B cell (primary cell): ENCODE measurements at regions of chr7 and their contacts with region 1.

Region 1: DNA sequence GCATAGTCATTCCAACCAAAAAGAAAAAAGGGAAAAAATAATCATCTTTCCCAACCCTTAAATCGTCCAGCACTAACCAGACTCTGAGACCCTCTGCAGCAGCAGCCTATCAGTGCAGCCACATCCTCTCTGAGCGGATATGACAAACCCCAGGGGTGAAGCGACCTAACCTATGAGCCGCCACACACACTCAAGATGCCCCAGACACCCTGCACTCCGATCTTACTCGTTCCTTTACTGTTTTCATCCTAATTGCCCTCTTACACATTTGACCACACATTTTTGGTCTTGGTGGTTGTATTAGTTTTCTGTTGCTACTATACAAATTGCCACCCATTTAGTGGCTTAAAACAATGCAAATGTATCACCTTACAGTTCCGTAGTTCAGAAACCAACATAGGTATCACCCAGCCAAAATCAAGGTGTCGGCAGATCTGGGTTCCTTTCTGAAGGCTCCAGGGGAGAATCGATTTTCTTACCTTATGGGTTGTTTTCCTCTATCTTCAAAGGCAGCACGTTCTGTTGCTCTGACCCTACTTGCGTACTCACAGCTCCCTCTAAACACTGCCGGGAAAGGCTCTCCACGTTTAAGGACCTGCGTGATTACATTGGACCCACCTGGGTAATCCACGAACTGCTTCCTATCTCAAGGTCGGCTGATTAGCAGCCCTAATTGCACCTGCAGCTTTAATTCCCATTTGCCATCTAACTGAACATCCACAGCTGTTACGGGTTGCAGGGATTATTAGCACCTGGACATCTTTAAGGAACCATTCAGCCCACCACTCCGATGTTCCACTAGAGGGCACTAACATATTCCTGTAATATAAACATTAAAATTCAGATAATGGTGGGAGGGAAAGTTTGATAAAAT is 37.3 kb upstream of the PRSS1 start:
- DNase-seq: peak; percentile 55
- ATAC-seq: peak; percentile 39
- H3K4me3 ChIP-seq: peak overlapping the region in 1 of 5 experiments; percentile 35
- H3K4me3 Mint-ChIP-seq: peak overlapping the region; percentile 66
- H3K27ac ChIP-seq: no peak overlapping the region
- H3K27ac Mint-ChIP-seq: peak overlapping the region; percentile 42
- H3K4me1 ChIP-seq: peaks cover 17 to 25% of the 10 kb centered on the region in 2 donors
- H3K4me1 Mint-ChIP-seq: peaks cover 24% of the 10 kb centered on the region
- H3K27me3 ChIP-seq: no peaks in the 10 kb centered on the region
- H3K27me3 Mint-ChIP-seq: peaks cover 4% of the 10 kb centered on the region
- CTCF ChIP-seq: peak; percentile 84

Region 2: GRCh38 chr7:142438235-142438922 is 273.6 kb before region 1 on chr7:
- CTCF ChIA-PET with region 1: no interaction called
- POLR2A ChIA-PET with region 1: no interaction called
- intact Hi-C with region 1: no loop called
- DNase-seq: peak; percentile 8
- ATAC-seq: no peak
- H3K4me3 ChIP-seq: no peak overlapping the region
- H3K4me3 Mint-ChIP-seq: no peak overlapping the region
- H3K27ac ChIP-seq: no peak overlapping the region
- H3K27ac Mint-ChIP-seq: no peak overlapping the region
- H3K4me1 ChIP-seq: peaks cover 3 to 13% of the 10 kb centered on the region in 2 donors
- H3K4me1 Mint-ChIP-seq: peaks cover 19% of the 10 kb centered on the region
- H3K27me3 ChIP-seq: no peaks in the 10 kb centered on the region
- H3K27me3 Mint-ChIP-seq: peaks cover 42% of the 10 kb centered on the region
- CTCF ChIP-seq: no peak

Region 3: DNA sequence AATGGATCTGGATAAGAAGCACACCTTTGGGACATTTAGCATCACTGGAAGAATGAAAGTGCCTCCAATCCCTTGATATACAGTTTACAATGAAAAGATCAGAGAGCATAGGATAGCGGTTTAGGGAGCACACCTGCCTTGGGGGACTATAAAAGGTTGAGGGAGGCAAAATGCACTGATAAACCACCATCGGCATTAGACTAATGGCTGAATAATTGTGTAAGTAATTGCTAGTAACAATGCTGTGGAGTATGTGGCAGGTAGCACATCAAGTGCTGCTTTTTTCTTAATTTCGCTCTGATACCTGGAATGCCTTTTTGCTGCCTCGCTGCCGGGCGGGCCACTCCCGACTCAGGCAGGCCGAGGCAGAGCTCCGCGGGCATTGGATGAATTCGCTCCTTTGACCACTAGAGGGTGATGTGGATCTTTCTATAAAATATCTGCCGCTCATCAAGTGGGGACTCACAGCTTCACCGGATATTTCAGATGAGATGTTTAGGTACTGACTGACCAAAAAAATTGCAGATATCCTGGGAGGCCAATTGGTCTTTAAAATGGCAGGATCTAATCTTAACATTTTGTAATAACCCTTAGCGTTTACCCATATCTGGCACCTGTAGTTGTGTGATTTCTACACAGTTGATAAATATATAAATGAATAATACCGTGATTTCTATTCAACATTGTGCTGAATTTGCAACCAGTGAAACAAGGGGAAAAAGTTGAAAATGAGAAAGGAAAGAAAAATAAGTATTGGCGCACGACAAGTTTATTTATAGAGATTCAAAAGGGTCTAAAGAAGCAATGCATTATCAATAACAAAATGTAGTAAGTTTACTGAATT is 79.5 kb before region 1 on chr7:
- CTCF ChIA-PET with region 1: interaction called, 23 read pairs
- POLR2A ChIA-PET with region 1: no interaction called
- intact Hi-C with region 1: loop called (anchors 1 kb)
- DNase-seq: peak; percentile 85
- ATAC-seq: peak; percentile 97
- H3K4me3 ChIP-seq: no peak overlapping the region
- H3K4me3 Mint-ChIP-seq: no peak overlapping the region
- H3K27ac ChIP-seq: no peak overlapping the region
- H3K27ac Mint-ChIP-seq: no peak overlapping the region
- H3K4me1 ChIP-seq: no peaks in the 10 kb centered on the region
- H3K4me1 Mint-ChIP-seq: peaks cover 3% of the 10 kb centered on the region
- H3K27me3 ChIP-seq: peaks cover 0 to 5% (median 2%) of the 10 kb centered on the region in 4 experiments
- H3K27me3 Mint-ChIP-seq: peaks cover 30% of the 10 kb centered on the region
- CTCF ChIP-seq: peak; percentile 85

Region 4: DNA sequence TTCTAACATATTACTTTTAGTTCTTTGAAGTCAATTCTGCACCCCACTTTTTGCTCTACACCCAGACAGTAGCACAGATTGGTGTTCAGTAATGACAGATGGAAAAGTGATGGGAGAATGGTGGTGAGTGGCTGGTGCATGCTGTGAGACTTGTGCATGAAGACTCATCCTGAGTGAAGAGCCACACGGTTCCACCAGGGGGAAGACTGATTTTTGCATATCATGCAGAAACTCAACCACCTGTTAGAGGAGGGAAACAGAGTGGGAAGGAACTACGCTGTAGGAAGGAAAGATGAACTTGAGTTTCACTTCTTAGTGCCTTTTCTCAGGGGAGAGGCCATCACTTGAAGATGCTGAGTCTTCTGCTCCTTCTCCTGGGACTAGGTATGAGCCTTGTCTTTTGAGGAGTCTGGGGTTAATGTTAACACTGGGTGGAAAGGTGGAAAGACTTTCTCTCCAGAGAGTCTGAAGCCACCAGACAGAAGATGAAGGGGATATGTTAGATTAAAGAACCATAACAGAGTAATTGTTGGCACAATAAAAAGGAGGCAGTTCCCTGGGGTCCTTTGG is 28.0 kb after region 1 on chr7:
- CTCF ChIA-PET with region 1: interaction called, 17 read pairs
- POLR2A ChIA-PET with region 1: no interaction called
- intact Hi-C with region 1: loop called (anchors 2 kb)
- DNase-seq: peak; percentile 82
- ATAC-seq: peak; percentile 98
- H3K4me3 ChIP-seq: peak overlapping the region in 1 of 5 experiments; percentile 16
- H3K4me3 Mint-ChIP-seq: peak overlapping the region; percentile 4
- H3K27ac ChIP-seq: no peak overlapping the region
- H3K27ac Mint-ChIP-seq: peak overlapping the region; percentile 75
- H3K4me1 ChIP-seq: peaks cover 22 to 26% of the 10 kb centered on the region in 2 donors
- H3K4me1 Mint-ChIP-seq: peaks cover 41% of the 10 kb centered on the region
- H3K27me3 ChIP-seq: no peaks in the 10 kb centered on the region
- H3K27me3 Mint-ChIP-seq: no peaks in the 10 kb centered on the region
- CTCF ChIP-seq: peak; percentile 64

Region 5: DNA sequence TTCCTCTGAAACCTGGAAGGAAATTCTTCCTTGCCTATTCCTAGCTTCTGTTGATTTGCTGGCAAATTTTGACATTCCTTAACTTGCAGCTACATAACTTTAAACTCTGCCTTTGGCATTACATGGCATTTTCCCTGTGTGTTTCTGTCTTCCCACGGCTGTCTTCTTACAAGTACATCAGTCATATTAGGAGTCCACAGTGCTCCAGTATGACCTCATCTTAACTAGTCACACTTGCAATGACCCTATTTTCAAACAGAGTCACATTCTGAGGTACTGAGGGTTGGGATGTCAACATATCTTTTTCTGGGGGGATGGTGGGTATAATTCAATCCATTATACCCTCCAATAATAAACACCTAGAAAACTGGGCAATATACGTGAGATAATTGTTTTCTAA is 105.5 kb after region 1 on chr7:
- CTCF ChIA-PET with region 1: interaction called, 288 read pairs
- POLR2A ChIA-PET with region 1: interaction called, 4 read pairs
- intact Hi-C with region 1: no loop called
- DNase-seq: no peak
- ATAC-seq: no peak
- H3K4me3 ChIP-seq: no peak overlapping the region
- H3K4me3 Mint-ChIP-seq: no peak overlapping the region
- H3K27ac ChIP-seq: no peak overlapping the region
- H3K27ac Mint-ChIP-seq: no peak overlapping the region
- H3K4me1 ChIP-seq: peaks cover 20 to 22% of the 10 kb centered on the region in 2 donors
- H3K4me1 Mint-ChIP-seq: peaks cover 22% of the 10 kb centered on the region
- H3K27me3 ChIP-seq: no peaks in the 10 kb centered on the region
- H3K27me3 Mint-ChIP-seq: no peaks in the 10 kb centered on the region
- CTCF ChIP-seq: no peak

Region 6: GRCh38 chr7:142866361-142867058 is 154.5 kb after region 1 on chr7:
- CTCF ChIA-PET with region 1: interaction called, 15 read pairs
- POLR2A ChIA-PET with region 1: no interaction called
- intact Hi-C with region 1: no loop called
- DNase-seq: peak; percentile 29
- ATAC-seq: no peak
- H3K4me3 ChIP-seq: no peak overlapping the region
- H3K4me3 Mint-ChIP-seq: no peak overlapping the region
- H3K27ac ChIP-seq: no peak overlapping the region
- H3K27ac Mint-ChIP-seq: no peak overlapping the region
- H3K4me1 ChIP-seq: no peaks in the 10 kb centered on the region
- H3K4me1 Mint-ChIP-seq: peaks cover 3% of the 10 kb centered on the region
- H3K27me3 ChIP-seq: no peaks in the 10 kb centered on the region
- H3K27me3 Mint-ChIP-seq: no peaks in the 10 kb centered on the region
- CTCF ChIP-seq: peak; percentile 24

Region 7: DNA sequence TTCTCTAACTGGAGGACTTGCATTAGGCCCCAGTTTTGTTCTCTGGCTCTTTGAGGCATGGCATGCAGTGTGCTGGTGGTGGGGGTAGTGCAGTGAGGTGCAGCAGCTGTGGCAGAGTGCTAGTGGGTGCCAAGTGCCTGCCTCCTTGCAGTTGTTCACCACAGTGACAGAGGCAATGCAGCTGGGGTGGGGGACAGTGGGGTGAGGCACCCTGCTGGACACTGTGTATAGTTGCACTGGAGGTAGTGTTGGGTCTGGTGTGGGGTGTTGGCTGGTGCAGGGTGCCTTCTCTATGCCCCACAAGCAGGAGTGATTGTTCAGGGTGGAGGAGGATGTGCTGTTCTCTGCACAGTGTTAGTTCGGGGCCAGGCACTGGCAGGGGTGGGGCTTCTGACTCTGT is 271.8 kb after region 1 on chr7:
- CTCF ChIA-PET with region 1: no interaction called
- POLR2A ChIA-PET with region 1: no interaction called
- intact Hi-C with region 1: no loop called
- DNase-seq: no peak
- ATAC-seq: no peak
- H3K4me3 ChIP-seq: no peak overlapping the region
- H3K4me3 Mint-ChIP-seq: no peak overlapping the region
- H3K27ac ChIP-seq: no peak overlapping the region
- H3K27ac Mint-ChIP-seq: no peak overlapping the region
- H3K4me1 ChIP-seq: no peaks in the 10 kb centered on the region
- H3K4me1 Mint-ChIP-seq: no peaks in the 10 kb centered on the region
- H3K27me3 ChIP-seq: peaks cover 0 to 5% (median 1%) of the 10 kb centered on the region in 4 experiments
- H3K27me3 Mint-ChIP-seq: peaks cover 21% of the 10 kb centered on the region
- CTCF ChIP-seq: no peak